CD8-positive, alpha-beta T cell (primary cell): ENCODE measurements at regions of chr5 and their contacts with region 1.

Region 1: DNA sequence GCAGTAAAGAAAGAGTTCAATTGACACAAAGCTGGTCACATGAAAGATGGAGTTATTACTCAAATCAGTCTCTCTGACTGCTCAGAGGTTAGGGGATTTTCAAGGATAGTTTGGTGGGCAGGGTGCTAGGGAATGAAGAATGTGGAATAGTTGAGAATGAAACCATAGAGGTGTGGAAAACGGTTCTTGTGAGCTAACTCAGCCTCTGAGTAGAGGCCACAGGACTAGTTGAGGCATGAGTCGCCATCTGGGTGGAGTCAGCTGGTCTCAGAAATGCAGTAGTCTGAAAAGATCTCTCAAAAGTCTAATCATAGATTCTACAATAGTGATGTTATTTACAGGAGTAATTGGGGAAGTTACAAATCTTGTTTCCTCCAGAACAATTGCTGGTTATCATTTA is 178.9 kb upstream of the SPEF2 start:
- DNase-seq: no peak
- ATAC-seq: no peak
- H3K4me3 ChIP-seq: no peak overlapping the region
- H3K4me3 Mint-ChIP-seq: no peak overlapping the region
- H3K27ac ChIP-seq: no peak overlapping the region
- H3K27ac Mint-ChIP-seq: no peak overlapping the region
- H3K4me1 ChIP-seq: no peaks in the 10 kb centered on the region
- H3K4me1 Mint-ChIP-seq: no peaks in the 10 kb centered on the region
- H3K27me3 ChIP-seq: peaks cover 0 to 9% of the 10 kb centered on the region in 2 experiments
- H3K27me3 Mint-ChIP-seq: peaks cover 28% of the 10 kb centered on the region
- CTCF ChIP-seq: no peak

Region 2: DNA sequence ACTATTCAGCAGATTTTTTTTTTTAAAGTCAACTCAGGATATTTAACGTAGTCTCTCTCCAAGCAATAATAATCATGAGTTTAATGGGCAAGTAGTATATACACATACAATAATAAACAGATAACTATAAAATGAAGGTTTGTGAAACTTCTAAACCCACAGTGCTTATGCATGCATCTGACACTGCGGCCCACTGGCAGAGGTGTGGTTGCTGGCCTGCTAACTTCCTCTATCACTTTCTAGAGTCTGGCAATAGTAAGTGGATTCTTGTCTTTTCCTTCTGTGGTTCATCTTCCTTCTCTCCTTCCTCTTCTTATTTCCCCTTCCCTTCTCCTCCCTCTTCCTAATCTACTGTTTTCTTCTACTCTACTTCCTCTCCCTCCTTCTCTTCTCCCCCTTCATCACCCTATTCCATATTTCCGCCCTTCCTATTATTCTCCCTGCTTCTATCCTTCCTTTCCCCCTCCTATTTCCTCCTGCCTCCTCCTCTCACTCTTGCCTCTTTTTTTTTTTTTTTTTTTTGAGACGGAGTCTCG is 372.5 kb before region 1 on chr5:
- CTCF ChIA-PET with region 1: no interaction called
- POLR2A ChIA-PET with region 1: no interaction called
- intact Hi-C with region 1: no loop called
- DNase-seq: no peak
- ATAC-seq: no peak
- H3K4me3 ChIP-seq: no peak overlapping the region
- H3K4me3 Mint-ChIP-seq: no peak overlapping the region
- H3K27ac ChIP-seq: no peak overlapping the region
- H3K27ac Mint-ChIP-seq: no peak overlapping the region
- H3K4me1 ChIP-seq: no peaks in the 10 kb centered on the region
- H3K4me1 Mint-ChIP-seq: no peaks in the 10 kb centered on the region
- H3K27me3 ChIP-seq: peaks cover 0 to 6% of the 10 kb centered on the region in 2 experiments
- H3K27me3 Mint-ChIP-seq: peaks cover 25% of the 10 kb centered on the region
- CTCF ChIP-seq: no peak

Region 3: DNA sequence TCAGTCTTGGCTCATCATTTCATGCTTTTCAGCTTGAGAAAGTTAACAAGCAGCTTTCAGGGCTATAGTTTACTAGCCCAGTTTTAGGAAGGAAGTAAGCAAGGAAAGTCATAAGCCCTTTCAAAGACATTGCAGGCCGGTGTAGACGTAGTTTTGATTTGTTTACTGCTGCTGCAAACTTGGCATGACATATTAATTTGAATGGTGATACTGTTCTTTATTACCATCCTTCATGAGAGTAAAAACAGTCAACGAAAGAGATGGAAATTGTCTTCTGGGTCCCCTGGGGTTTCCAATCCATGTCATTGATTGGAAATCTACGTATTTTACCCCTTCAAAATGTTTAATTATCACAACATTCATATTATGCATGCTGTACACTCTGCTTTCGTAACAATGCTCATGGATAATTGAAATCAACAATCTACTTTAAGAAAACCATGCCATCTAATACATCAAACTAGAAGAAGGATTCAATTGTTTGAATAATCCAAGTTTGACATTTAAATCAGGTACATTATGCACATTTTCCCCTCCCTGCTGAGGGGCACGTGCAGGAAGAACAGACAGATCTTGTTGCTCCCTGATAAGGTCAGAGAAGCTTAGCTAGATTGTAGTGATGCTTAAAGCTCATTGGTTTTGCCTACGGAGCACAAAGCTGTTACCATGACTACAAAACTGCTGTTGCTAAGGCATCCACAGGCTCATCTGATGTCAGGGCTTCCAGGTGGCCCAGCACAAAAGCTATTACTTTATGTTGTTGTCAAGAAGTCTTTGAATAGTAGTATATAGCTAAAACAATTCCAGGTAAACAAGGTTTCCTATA is 68.6 kb before region 1 on chr5:
- CTCF ChIA-PET with region 1: no interaction called
- POLR2A ChIA-PET with region 1: no interaction called
- intact Hi-C with region 1: no loop called
- DNase-seq: peak in 1 of 9 experiments; percentile 1
- ATAC-seq: no peak
- H3K4me3 ChIP-seq: no peak overlapping the region
- H3K4me3 Mint-ChIP-seq: no peak overlapping the region
- H3K27ac ChIP-seq: no peak overlapping the region
- H3K27ac Mint-ChIP-seq: no peak overlapping the region
- H3K4me1 ChIP-seq: no peaks in the 10 kb centered on the region
- H3K4me1 Mint-ChIP-seq: no peaks in the 10 kb centered on the region
- H3K27me3 ChIP-seq: no peaks in the 10 kb centered on the region
- H3K27me3 Mint-ChIP-seq: peaks cover 2% of the 10 kb centered on the region
- CTCF ChIP-seq: no peak

Region 4: GRCh38 chr5:35473589-35473988 is 34.8 kb after region 1 on chr5:
- CTCF ChIA-PET with region 1: no interaction called
- POLR2A ChIA-PET with region 1: no interaction called
- intact Hi-C with region 1: loop called in 1 of 2 experiments (anchors 2 kb)
- DNase-seq: no peak
- ATAC-seq: no peak
- H3K4me3 ChIP-seq: no peak overlapping the region
- H3K4me3 Mint-ChIP-seq: no peak overlapping the region
- H3K27ac ChIP-seq: no peak overlapping the region
- H3K27ac Mint-ChIP-seq: no peak overlapping the region
- H3K4me1 ChIP-seq: no peaks in the 10 kb centered on the region
- H3K4me1 Mint-ChIP-seq: peaks cover 4% of the 10 kb centered on the region
- H3K27me3 ChIP-seq: no peaks in the 10 kb centered on the region
- H3K27me3 Mint-ChIP-seq: no peaks in the 10 kb centered on the region
- CTCF ChIP-seq: no peak